ENCODE measurements at regions of chr11 and their contacts with region 1.

Region 1: GRCh38 chr11:128630367-128631230 is 43.2 kb upstream of the ETS1 start:
- DNase-seq: peak; percentile 31
- H3K4me3 ChIP-seq: no peak overlapping the region
- CTCF ChIP-seq: peak; percentile 66

Region 2: GRCh38 chr11:128180446-128181087 is 450.0 kb before region 1 on chr11:
- CTCF ChIA-PET with region 1: interaction called, 490 read pairs
- POLR2A ChIA-PET with region 1: no interaction called
- DNase-seq: peak; percentile 72
- H3K4me3 ChIP-seq: no peak overlapping the region
- CTCF ChIP-seq: no peak

Region 3: GRCh38 chr11:128302425-128303186 is 328.0 kb before region 1 on chr11:
- CTCF ChIA-PET with region 1: interaction called, 209 read pairs
- POLR2A ChIA-PET with region 1: no interaction called
- DNase-seq: no peak
- H3K4me3 ChIP-seq: no peak overlapping the region
- CTCF ChIP-seq: no peak

Region 4: GRCh38 chr11:128472128-128473089 is 158.2 kb before region 1 on chr11:
- CTCF ChIA-PET with region 1: interaction called, 96 read pairs
- POLR2A ChIA-PET with region 1: no interaction called
- DNase-seq: no peak
- H3K4me3 ChIP-seq: no peak overlapping the region
- CTCF ChIP-seq: no peak

Region 5: DNA sequence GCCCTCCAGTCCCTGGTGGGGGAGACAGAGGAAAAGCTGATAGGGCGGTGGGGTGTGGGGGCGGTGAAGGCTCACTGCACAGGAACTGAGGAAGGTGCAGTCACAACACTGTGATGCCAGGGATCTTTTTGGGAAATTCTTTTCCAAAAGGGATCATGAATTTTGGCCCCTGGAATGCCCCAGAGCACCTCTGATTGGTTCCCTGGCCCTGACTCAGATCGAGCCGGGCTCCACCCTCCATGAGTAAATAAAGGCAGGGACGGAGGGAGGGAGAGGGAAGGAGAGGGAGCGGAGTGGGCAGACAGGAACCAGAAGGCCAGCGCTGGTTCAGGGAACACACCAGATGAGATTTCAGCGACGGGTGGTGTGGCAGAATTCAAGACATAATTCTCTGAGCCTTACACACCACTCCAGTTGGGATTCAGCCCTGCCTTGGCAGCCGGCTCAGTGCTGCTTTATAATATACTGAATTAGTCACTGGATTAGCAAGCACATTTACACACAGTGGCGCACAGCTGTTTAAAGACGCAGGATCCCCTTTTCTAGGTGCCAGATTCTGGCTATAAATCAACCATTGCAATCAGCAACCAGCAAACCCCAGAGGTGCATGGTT is 123.5 kb before region 1 on chr11:
- CTCF ChIA-PET with region 1: interaction called, 39 read pairs
- POLR2A ChIA-PET with region 1: no interaction called
- DNase-seq: peak; percentile 84
- H3K4me3 ChIP-seq: peak overlapping the region; percentile 43
- CTCF ChIP-seq: no peak

Region 6: GRCh38 chr11:128603752-128604414 is 26.7 kb before region 1 on chr11:
- CTCF ChIA-PET with region 1: interaction called, 12 read pairs
- POLR2A ChIA-PET with region 1: no interaction called
- DNase-seq: no peak
- H3K4me3 ChIP-seq: no peak overlapping the region
- CTCF ChIP-seq: no peak